Activated naive CD4-positive, alpha-beta T cell treated with anti-CD3 and anti-CD28 coated beads, Interleukin-2, amount 10 ng/mL, durations not matched to agents 7 days and 5 days (primary cell): ENCODE measurements at regions of chr1 and their contacts with region 1.

Region 1: DNA sequence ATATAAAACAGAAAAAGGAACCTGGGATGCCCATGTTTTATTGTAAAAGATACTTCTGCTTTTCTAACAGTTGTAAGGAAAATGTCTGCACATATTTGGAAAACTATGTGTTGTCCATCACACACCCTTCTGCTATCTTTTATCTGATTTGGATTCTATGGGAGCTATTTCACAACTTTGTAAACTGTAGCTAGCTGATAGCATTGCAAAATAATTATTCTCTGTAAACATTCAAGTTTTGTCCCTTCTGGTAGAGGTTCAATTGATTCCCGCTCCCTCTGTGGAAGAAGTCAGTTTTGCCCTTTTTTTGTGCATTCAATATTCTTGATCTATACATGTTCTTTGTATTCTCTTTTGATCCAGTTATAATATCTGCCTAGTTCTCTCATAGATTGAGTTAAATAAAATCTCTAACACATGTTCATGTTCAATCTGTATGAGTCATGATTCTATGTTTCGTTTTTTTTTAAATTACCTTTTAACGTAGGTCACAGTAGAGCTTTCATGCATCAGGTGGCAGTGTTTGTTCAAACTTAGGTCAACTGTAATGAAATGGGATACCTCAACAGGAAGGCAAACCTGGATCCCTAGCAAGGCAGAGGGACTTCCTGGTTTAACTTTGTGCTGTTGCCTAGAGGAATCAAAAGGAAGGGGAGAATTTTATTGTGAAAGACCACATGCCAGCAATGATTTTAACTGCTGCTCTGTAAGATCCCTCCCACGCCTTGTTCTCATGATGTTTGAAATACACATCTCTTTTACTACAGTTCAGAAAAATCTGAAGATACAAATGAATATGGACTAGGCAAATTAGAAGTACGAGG is 26.0 kb upstream of the BCL9 start:
- DNase-seq: no peak
- H3K4me3 Mint-ChIP-seq: no peak overlapping the region
- H3K27ac Mint-ChIP-seq: no peak overlapping the region
- H3K4me1 Mint-ChIP-seq: peaks cover 2% of the 10 kb centered on the region
- H3K27me3 Mint-ChIP-seq: peaks cover 28% of the 10 kb centered on the region

Region 2: DNA sequence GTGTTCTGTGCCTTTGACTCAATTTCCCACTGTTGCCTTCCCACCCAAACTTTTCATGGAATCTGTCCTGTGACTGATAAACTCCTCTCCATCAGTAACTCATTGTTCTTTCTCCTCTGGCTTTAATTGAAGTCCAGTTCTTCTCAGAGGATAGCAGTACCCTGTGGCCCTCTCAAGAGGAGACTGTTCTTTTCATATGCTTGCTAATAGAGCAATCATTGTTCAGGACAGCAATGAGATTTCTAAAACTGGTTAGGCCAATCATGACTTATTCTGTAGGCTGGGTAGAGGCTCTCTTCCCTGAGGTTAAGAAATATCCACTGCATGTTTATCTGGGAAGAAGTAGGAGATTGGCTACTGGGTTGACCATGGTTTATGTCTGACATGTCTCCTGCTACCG is 174.0 kb before region 1 on chr1:
- CTCF ChIA-PET with region 1: no interaction called
- DNase-seq: no peak
- H3K4me3 Mint-ChIP-seq: no peak overlapping the region
- H3K27ac Mint-ChIP-seq: no peak overlapping the region
- H3K4me1 Mint-ChIP-seq: no peaks in the 10 kb centered on the region
- H3K27me3 Mint-ChIP-seq: peaks cover 32% of the 10 kb centered on the region

Region 3: GRCh38 chr1:147627435-147628110 is 112.3 kb after region 1 on chr1:
- CTCF ChIA-PET with region 1: interaction called, 27 read pairs
- DNase-seq: peak; percentile 63
- H3K4me3 Mint-ChIP-seq: no peak overlapping the region
- H3K27ac Mint-ChIP-seq: no peak overlapping the region
- H3K4me1 Mint-ChIP-seq: peaks cover 20% of the 10 kb centered on the region
- H3K27me3 Mint-ChIP-seq: peaks cover under 1% of the 10 kb centered on the region

Region 4: GRCh38 chr1:147635342-147635741 is 120.1 kb after region 1 on chr1:
- CTCF ChIA-PET with region 1: interaction called, 17 read pairs
- DNase-seq: no peak
- H3K4me3 Mint-ChIP-seq: no peak overlapping the region
- H3K27ac Mint-ChIP-seq: no peak overlapping the region
- H3K4me1 Mint-ChIP-seq: peaks cover 4% of the 10 kb centered on the region
- H3K27me3 Mint-ChIP-seq: peaks cover 3% of the 10 kb centered on the region

Region 5: DNA sequence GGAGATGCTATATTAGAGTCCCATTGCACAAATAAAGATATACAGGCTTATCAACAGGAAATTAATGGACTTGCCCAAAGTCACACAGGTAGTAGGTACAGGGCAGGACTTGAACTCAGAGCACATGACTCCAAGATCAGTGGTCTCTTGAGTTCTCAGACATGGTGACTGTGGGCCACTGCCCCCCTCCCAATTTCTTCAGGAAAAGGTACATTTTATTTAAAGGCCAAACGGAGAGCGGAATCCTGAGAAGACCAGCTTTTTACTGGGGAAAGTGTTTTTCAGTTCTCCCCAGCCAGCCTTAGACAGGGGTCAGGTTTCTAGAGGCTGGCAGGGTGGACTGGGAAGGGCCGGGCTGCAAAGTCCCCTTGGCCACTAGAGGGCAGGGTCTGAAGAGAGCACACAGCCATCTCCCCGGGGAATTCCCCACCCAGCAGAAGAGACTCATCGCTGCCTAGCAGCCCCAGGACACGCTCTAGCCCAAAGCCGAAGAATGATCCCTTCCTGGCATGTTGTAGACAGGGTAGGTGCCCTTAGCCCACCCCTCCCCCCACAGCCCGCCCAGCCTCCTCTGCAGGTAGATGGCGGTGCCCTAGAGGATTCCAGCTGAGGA is 125.4 kb after region 1 on chr1:
- CTCF ChIA-PET with region 1: interaction called, 27 read pairs
- DNase-seq: peak; percentile 85
- H3K4me3 Mint-ChIP-seq: no peak overlapping the region
- H3K27ac Mint-ChIP-seq: no peak overlapping the region
- H3K4me1 Mint-ChIP-seq: peaks cover 28% of the 10 kb centered on the region
- H3K27me3 Mint-ChIP-seq: no peaks in the 10 kb centered on the region

Region 6: GRCh38 chr1:147741065-147741464 is 225.8 kb after region 1 on chr1:
- CTCF ChIA-PET with region 1: no interaction called
- DNase-seq: no peak
- H3K4me3 Mint-ChIP-seq: no peak overlapping the region
- H3K27ac Mint-ChIP-seq: no peak overlapping the region
- H3K4me1 Mint-ChIP-seq: no peaks in the 10 kb centered on the region
- H3K27me3 Mint-ChIP-seq: peaks cover 13% of the 10 kb centered on the region